Panc1 (cell line): ENCODE measurements at regions of chr2 and their contacts with region 1.

Region 1: GRCh38 chr2:169452080-169452479 is 27.2 kb upstream of the BBS5 start:
- DNase-seq: peak; percentile 10
- ATAC-seq: peak; percentile 92
- H3K4me3 ChIP-seq: no peak overlapping the region
- H3K27ac ChIP-seq: no peak overlapping the region
- H3K4me1 ChIP-seq: no peaks in the 10 kb centered on the region
- H3K27me3 ChIP-seq: no peaks in the 10 kb centered on the region
- CTCF ChIP-seq: peak; percentile 72

Region 2: GRCh38 chr2:169247211-169247610 is 204.9 kb before region 1 on chr2:
- CTCF ChIA-PET with region 1: interaction called, 11 read pairs
- POLR2A ChIA-PET with region 1: no interaction called
- in situ Hi-C with region 1: no loop called
- intact Hi-C with region 1: no loop called
- DNase-seq: no peak
- ATAC-seq: no peak
- H3K4me3 ChIP-seq: no peak overlapping the region
- H3K27ac ChIP-seq: no peak overlapping the region
- H3K4me1 ChIP-seq: no peaks in the 10 kb centered on the region
- H3K27me3 ChIP-seq: no peaks in the 10 kb centered on the region; the same call in 1 of the 2 replicates
- CTCF ChIP-seq: no peak

Region 3: DNA sequence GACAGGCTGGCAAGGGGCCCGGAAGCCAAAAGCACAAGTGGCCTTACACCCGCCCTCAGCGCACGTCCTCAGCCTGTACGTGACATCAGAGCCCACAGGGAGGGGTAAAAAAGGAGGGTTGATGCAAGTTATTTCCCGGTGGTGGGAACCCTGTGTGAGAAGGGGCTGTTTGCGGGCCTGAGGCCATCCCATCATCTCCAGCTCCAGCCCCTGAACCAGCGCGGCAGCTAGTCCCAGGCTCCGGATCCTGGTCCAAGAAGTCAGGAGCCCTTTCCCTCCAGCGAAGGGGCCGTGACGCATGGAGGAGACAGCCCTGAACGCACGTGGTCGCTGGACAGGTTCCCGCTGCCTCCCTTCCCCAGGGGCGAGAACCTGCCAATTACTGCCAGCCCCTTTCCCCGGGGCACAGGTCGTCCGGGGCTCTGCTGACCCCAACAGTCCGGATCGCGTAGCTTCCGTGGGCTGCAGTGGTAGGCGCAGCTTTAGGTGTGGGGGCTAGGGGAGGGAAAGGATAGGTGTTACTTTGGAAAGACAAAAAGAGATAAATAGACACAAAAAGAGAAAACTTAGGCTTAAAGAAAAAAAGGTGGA is 88.4 kb before region 1 on chr2:
- CTCF ChIA-PET with region 1: no interaction called
- POLR2A ChIA-PET with region 1: no interaction called
- in situ Hi-C with region 1: no loop called
- intact Hi-C with region 1: no loop called
- DNase-seq: no peak
- ATAC-seq: peak; percentile 24; the same call in 1 of the 2 replicates
- H3K4me3 ChIP-seq: peak overlapping the region; percentile 35 to 45
- H3K27ac ChIP-seq: no peak overlapping the region
- H3K4me1 ChIP-seq: peaks cover 15% of the 10 kb centered on the region
- H3K27me3 ChIP-seq: peaks cover 27% of the 10 kb centered on the region
- CTCF ChIP-seq: no peak

Region 4: GRCh38 chr2:169961911-169962310 is 509.8 kb after region 1 on chr2:
- CTCF ChIA-PET with region 1: no interaction called
- POLR2A ChIA-PET with region 1: no interaction called
- in situ Hi-C with region 1: no loop called
- intact Hi-C with region 1: no loop called
- DNase-seq: no peak
- ATAC-seq: no peak
- H3K4me3 ChIP-seq: no peak overlapping the region
- H3K27ac ChIP-seq: no peak overlapping the region
- H3K4me1 ChIP-seq: peaks cover 5% of the 10 kb centered on the region; the same call in 1 of the 2 replicates
- H3K27me3 ChIP-seq: no peaks in the 10 kb centered on the region
- CTCF ChIP-seq: no peak